ENCODE measurements at regions of chr10 and their contacts with region 1.

Region 1: GRCh38 chr10:60032723-60033122 is 126.4 kb upstream of the CCDC6 start:
- DNase-seq: peak in 1 of 2 donors; percentile 45
- ATAC-seq: peak; percentile 57 to 93 (median 82)
- H3K4me3 ChIP-seq: no peak overlapping the region
- H3K27ac ChIP-seq: peak overlapping the region in 1 of 10 donors; percentile 44
- H3K4me1 ChIP-seq: peaks cover 0 to 31% (median 6%) of the 10 kb centered on the region in 9 donors
- H3K27me3 ChIP-seq: no peaks in the 10 kb centered on the region
- CTCF ChIP-seq: peak in 6 of 9 donors; percentile 49 to 67 (median 61)

Region 2: GRCh38 chr10:59631237-59631636 is 401.5 kb before region 1 on chr10:
- intact Hi-C with region 1: loop called in 9 of 10 experiments (anchors 2 to 10 kb)
- DNase-seq: no peak
- ATAC-seq: no peak
- H3K4me3 ChIP-seq: no peak overlapping the region
- H3K27ac ChIP-seq: no peak overlapping the region
- H3K4me1 ChIP-seq: no peaks in the 10 kb centered on the region
- H3K27me3 ChIP-seq: peaks cover 0 to 19% (median 0%) of the 10 kb centered on the region in 7 donors
- CTCF ChIP-seq: no peak

Region 3: GRCh38 chr10:59865101-59865500 is 167.6 kb before region 1 on chr10:
- intact Hi-C with region 1: loop called in 3 of 10 experiments (anchors 10 kb)
- DNase-seq: peak in 1 of 2 donors; percentile 40
- ATAC-seq: peak; percentile 67 to 88 (median 76)
- H3K4me3 ChIP-seq: no peak overlapping the region
- H3K27ac ChIP-seq: peak overlapping the region in 1 of 10 donors; percentile 25
- H3K4me1 ChIP-seq: peaks cover 0 to 45% (median 20%) of the 10 kb centered on the region in 9 donors
- H3K27me3 ChIP-seq: no peaks in the 10 kb centered on the region
- CTCF ChIP-seq: peak in 7 of 9 donors; percentile 38 to 68 (median 51)

Region 4: DNA sequence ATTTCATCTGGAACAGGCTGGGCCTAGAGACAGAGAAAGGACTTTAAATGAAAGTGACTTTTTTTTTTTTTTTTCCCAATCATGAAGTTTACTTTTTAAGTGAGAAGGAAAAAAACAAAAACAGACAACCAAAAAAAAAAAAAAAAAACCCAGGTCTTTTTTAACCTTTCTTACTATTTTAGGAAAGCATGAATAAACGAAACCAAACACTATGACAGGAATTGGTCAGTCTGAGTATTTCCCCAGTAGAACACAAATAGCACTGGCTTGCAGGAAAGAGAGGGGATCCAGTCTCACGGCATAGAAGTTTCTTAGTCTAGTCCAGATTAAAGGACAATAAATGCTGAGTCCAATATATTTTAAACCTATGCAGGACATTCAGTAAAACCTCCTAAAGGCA is 54.1 kb after region 1 on chr10:
- intact Hi-C with region 1: no loop called
- DNase-seq: no peak
- ATAC-seq: no peak
- H3K4me3 ChIP-seq: no peak overlapping the region
- H3K27ac ChIP-seq: no peak overlapping the region
- H3K4me1 ChIP-seq: no peaks in the 10 kb centered on the region
- H3K27me3 ChIP-seq: no peaks in the 10 kb centered on the region
- CTCF ChIP-seq: no peak

Region 5: DNA sequence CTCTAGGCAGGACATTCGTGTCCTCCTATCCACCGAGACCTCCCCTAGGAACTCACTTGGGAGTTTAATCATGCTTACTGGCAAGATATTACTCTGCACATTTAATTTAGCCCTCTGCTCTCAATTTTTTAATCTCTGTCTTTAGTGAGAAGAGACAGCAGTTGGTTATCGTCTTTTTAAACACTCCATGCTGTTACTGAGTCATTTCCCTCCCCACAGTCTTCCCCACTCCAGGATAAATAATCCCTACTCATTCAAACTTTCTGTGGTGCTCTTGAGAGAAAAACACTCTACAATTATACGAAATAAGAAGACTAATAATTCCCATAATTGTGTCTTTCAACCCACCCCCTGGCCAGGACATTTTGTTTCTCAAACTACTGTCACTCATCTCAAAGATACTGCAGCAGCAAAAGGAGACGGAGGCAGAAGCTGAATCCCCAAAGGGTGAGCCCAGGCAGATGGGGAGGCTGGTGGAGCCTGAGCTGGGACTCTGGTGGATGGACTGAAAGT is 272.7 kb after region 1 on chr10:
- intact Hi-C with region 1: no loop called
- DNase-seq: no peak
- ATAC-seq: peak in 4 of 8 donors; percentile 17 to 48 (median 31)
- H3K4me3 ChIP-seq: no peak overlapping the region
- H3K27ac ChIP-seq: peak overlapping the region in 5 of 10 donors; percentile 39 to 65 (median 58)
- H3K4me1 ChIP-seq: peaks cover 0 to 10% (median 0%) of the 10 kb centered on the region in 9 donors
- H3K27me3 ChIP-seq: no peaks in the 10 kb centered on the region
- CTCF ChIP-seq: no peak

Measured in heart right ventricle (tissue), 16 donors.